ENCODE measurements at regions of chr21 and their contacts with region 1.

Region 1: GRCh38 chr21:22791986-22792560 is 1793.9 kb downstream of the NCAM2 start:
- DNase-seq: peak; percentile 33
- CTCF ChIP-seq: peak; percentile 54

Region 2: DNA sequence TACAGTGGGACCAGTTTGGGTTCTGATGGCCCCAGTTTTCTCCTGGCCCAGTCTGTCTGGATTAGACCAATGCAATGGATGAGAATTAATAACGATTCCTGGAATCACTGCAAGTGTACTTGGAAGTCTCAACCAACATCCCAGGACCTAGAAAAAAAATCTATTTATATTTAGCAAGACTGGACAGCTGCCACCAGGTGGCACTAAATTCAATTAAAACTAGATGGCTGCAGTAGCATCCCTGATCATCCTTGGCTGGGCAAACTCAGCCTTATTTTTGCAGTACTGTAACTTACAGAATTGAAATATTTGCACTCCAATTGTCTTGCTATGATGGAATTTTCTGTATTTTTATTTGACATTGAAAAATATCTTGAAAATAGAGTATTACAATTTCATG is 1628.2 kb before region 1 on chr21:
- in situ Hi-C with region 1: loop called (anchors 25 kb)
- DNase-seq: peak; percentile 19
- CTCF ChIP-seq: no peak

Region 3: GRCh38 chr21:22300657-22301056 is 491.4 kb before region 1 on chr21:
- in situ Hi-C with region 1: no loop called
- DNase-seq: no peak
- CTCF ChIP-seq: no peak